H1 (cell line): ENCODE measurements at regions of chr5 and their contacts with region 1.

Region 1: GRCh38 chr5:170791325-170791954 is 7.9 kb downstream of the GABRP start:
- DNase-seq: peak in 1 of 2 experiments; percentile 89
- H3K4me3 ChIP-seq: no peak overlapping the region
- H3K27ac ChIP-seq: no peak overlapping the region
- H3K4me1 ChIP-seq: peaks cover 0 to 3% (median 1%) of the 10 kb centered on the region in 4 experiments; a peak in 5 of 7 replicates
- H3K27me3 ChIP-seq: no peaks in the 10 kb centered on the region; a peak in 1 of 7 replicates
- CTCF ChIP-seq: peak; percentile 59 to 91 (median 85)
- EP300 ChIP-seq: no peak
- POLR2A ChIP-seq: no peak
- RAD21 ChIP-seq: peak; percentile 99

Region 2: DNA sequence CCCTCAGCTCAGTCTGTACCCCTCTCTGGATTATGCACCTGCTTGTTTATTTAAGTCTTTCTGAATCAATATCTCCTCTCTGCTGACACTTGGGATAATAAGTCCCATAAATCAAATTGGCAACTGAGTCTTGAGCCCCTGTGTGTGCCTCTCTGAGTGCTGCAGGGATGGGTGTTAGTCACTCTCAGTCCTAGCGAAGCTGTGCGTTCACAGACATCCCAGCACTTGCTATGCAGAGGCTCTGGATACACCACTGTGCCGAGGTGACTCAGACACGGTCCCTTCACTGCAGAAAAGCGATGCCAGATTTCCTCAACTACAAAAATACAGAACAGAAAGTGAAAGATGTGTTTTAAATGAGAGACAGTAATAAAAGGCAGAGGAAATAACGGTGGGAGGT is 398.2 kb before region 1 on chr5:
- CTCF ChIA-PET with region 1: no interaction called
- POLR2A ChIA-PET with region 1: no interaction called
- DNase-seq: no peak
- H3K4me3 ChIP-seq: no peak overlapping the region
- H3K27ac ChIP-seq: no peak overlapping the region
- H3K4me1 ChIP-seq: peaks cover 6 to 38% (median 19%) of the 10 kb centered on the region in 4 experiments
- H3K27me3 ChIP-seq: no peaks in the 10 kb centered on the region
- CTCF ChIP-seq: no peak
- EP300 ChIP-seq: no peak
- POLR2A ChIP-seq: no peak
- RAD21 ChIP-seq: no peak

Region 3: DNA sequence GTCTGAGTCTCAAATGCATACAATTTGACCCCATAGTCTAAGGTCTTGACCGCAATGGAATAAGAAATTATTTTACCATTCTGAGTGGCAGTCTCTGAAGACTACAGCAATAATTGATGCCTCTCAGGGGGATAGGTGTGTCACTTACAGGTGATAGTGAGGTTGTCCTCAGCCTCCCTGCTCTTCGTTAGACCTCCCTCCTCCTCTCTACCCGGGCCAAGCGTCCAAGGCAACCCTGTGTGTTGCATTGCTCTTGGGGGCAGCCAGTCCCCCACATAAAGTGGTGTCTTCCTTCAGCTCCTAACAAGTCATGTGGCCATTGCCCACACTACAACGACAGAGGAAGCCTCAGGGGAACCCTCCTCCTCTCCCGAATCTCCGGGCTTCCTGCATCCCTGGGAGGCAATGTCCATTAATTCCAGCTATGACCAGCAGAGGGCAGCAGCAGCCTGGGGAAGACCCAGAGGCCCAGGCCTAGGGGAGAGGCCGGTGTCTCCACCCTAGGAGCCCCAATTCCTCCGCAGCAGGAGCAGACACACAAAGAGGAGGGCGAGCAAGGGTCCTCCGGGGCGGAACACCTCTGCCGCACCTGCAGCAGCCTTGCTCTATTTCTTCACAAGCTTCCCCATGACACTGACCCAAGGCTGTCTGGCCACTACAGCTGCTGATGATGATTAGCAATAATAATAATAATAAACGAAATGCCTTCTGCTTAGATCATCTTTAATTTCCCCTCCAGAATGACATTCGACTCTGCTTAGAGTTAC is 152.8 kb before region 1 on chr5:
- CTCF ChIA-PET with region 1: interaction called, 157 read pairs
- POLR2A ChIA-PET with region 1: interaction called, 4 read pairs
- DNase-seq: peak; percentile 70 to 99
- H3K4me3 ChIP-seq: no peak overlapping the region
- H3K27ac ChIP-seq: no peak overlapping the region
- H3K4me1 ChIP-seq: peaks cover 10 to 13% (median 12%) of the 10 kb centered on the region in 4 experiments; a peak in 6 of 7 replicates
- H3K27me3 ChIP-seq: no peaks in the 10 kb centered on the region
- CTCF ChIP-seq: peak in 2 of 3 experiments; percentile 90 to 93; a peak in 3 of 4 replicates
- EP300 ChIP-seq: no peak
- POLR2A ChIP-seq: no peak
- RAD21 ChIP-seq: peak; percentile 97 to 99

Region 4: GRCh38 chr5:170697031-170697430 is 94.4 kb before region 1 on chr5:
- CTCF ChIA-PET with region 1: interaction called, 99 read pairs
- POLR2A ChIA-PET with region 1: no interaction called
- DNase-seq: no peak
- H3K4me3 ChIP-seq: no peak overlapping the region
- H3K27ac ChIP-seq: no peak overlapping the region
- H3K4me1 ChIP-seq: no peaks in the 10 kb centered on the region
- H3K27me3 ChIP-seq: no peaks in the 10 kb centered on the region
- CTCF ChIP-seq: no peak
- EP300 ChIP-seq: no peak
- POLR2A ChIP-seq: no peak
- RAD21 ChIP-seq: no peak

Region 5: DNA sequence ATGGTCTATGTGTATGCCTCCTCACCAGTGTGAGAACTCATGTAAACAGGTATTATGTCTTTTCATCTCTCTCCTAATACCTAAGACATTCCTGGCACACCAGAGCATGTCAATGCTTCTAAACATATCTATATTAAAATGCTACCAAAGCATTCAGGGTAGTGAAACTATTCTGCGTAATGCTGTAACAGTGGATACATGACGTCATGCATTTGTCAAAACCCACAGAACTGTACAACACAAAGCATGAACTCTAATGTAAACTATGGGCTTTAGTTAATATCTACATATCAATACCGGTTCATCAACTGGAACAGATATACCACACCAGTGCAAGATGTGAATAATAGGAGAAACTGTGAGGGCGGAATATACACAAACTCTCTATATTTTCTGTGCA is 80.2 kb before region 1 on chr5:
- CTCF ChIA-PET with region 1: interaction called, 15 read pairs
- POLR2A ChIA-PET with region 1: no interaction called
- DNase-seq: no peak
- H3K4me3 ChIP-seq: no peak overlapping the region
- H3K27ac ChIP-seq: no peak overlapping the region
- H3K4me1 ChIP-seq: no peaks in the 10 kb centered on the region
- H3K27me3 ChIP-seq: no peaks in the 10 kb centered on the region
- CTCF ChIP-seq: no peak
- EP300 ChIP-seq: no peak
- POLR2A ChIP-seq: no peak
- RAD21 ChIP-seq: no peak

Region 6: GRCh38 chr5:170747851-170748250 is 43.6 kb before region 1 on chr5:
- CTCF ChIA-PET with region 1: interaction called, 650 read pairs
- POLR2A ChIA-PET with region 1: interaction called, 123 read pairs
- DNase-seq: peak in 1 of 2 experiments; percentile 77
- H3K4me3 ChIP-seq: no peak overlapping the region
- H3K27ac ChIP-seq: no peak overlapping the region
- H3K4me1 ChIP-seq: peaks cover 4 to 23% (median 15%) of the 10 kb centered on the region in 4 experiments
- H3K27me3 ChIP-seq: no peaks in the 10 kb centered on the region
- CTCF ChIP-seq: peak in 2 of 3 experiments; percentile 72 to 82; a peak in 3 of 4 replicates
- EP300 ChIP-seq: no peak
- POLR2A ChIP-seq: no peak
- RAD21 ChIP-seq: peak; percentile 51 to 68

Region 7: GRCh38 chr5:170774836-170775235 is 16.6 kb before region 1 on chr5:
- CTCF ChIA-PET with region 1: interaction called, 61 read pairs
- POLR2A ChIA-PET with region 1: interaction called, 8 read pairs
- DNase-seq: no peak
- H3K4me3 ChIP-seq: no peak overlapping the region
- H3K27ac ChIP-seq: no peak overlapping the region
- H3K4me1 ChIP-seq: peaks cover 4 to 15% (median 8%) of the 10 kb centered on the region in 4 experiments
- H3K27me3 ChIP-seq: no peaks in the 10 kb centered on the region
- CTCF ChIP-seq: peak in 1 of 3 experiments; percentile 19; a peak in 2 of 4 replicates
- EP300 ChIP-seq: no peak
- POLR2A ChIP-seq: no peak
- RAD21 ChIP-seq: peak in 1 of 2 experiments; percentile 38; a peak in 1 of 4 replicates